Caco-2 (cell line): ENCODE measurements at regions of chr21 and their contacts with region 1.

Region 1: DNA sequence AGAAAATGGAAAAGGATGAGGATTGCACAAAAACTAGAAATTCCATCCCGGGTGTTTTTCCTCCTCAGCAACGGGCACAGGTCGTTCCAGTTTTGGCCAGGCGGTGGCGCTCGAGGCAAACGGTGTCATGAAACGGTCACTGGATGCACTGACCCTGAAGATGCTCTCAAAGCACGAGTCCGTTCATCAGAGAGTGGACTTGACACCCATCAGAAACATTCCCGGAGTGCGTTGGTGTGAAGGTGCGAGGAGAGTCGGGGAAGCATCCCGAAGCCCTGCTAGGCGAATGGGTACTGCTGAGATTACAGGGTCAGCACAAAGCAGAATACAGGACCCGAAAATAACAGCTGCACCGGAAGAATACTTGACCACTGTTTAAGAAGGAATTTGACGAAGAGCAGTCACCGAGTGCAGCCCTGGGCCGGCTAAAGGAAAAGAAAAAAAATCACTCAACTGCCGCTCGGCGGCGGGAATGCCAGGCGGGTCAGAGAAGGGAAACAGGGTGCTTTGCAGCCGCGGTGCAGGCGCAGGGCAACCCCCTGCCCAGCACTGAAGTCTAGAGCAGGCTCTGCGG is 71.7 kb upstream of the ETS2 start:
- DNase-seq: peak; percentile 81 to 90
- H3K4me3 ChIP-seq: no peak overlapping the region
- H3K4me3 Mint-ChIP-seq: peak overlapping the region; percentile 75
- H3K27ac Mint-ChIP-seq: peak overlapping the region; percentile 31
- H3K4me1 ChIP-seq: no peaks in the 10 kb centered on the region
- H3K4me1 Mint-ChIP-seq: peaks cover 7% of the 10 kb centered on the region
- H3K27me3 ChIP-seq: no peaks in the 10 kb centered on the region
- H3K27me3 Mint-ChIP-seq: no peaks in the 10 kb centered on the region
- CTCF ChIP-seq: peak; percentile 89

Region 2: GRCh38 chr21:38770660-38771059 is 36.6 kb after region 1 on chr21:
- CTCF ChIA-PET with region 1: no interaction called
- POLR2A ChIA-PET with region 1: no interaction called
- intact Hi-C with region 1: loop called (anchors 1 kb)
- DNase-seq: no peak
- H3K4me3 ChIP-seq: no peak overlapping the region
- H3K4me3 Mint-ChIP-seq: no peak overlapping the region
- H3K27ac Mint-ChIP-seq: peak overlapping the region; percentile 74
- H3K4me1 ChIP-seq: peaks cover 33% of the 10 kb centered on the region
- H3K4me1 Mint-ChIP-seq: peaks cover 26% of the 10 kb centered on the region
- H3K27me3 ChIP-seq: no peaks in the 10 kb centered on the region
- H3K27me3 Mint-ChIP-seq: no peaks in the 10 kb centered on the region
- CTCF ChIP-seq: no peak

Region 3: GRCh38 chr21:39125752-39126485 is 391.9 kb after region 1 on chr21:
- CTCF ChIA-PET with region 1: interaction called, 3 read pairs
- POLR2A ChIA-PET with region 1: no interaction called
- intact Hi-C with region 1: loop called (anchors 1 kb)
- DNase-seq: peak; percentile 57 to 66
- H3K4me3 ChIP-seq: no peak overlapping the region
- H3K4me3 Mint-ChIP-seq: no peak overlapping the region
- H3K27ac Mint-ChIP-seq: no peak overlapping the region
- H3K4me1 ChIP-seq: no peaks in the 10 kb centered on the region
- H3K4me1 Mint-ChIP-seq: peaks cover 7% of the 10 kb centered on the region
- H3K27me3 ChIP-seq: no peaks in the 10 kb centered on the region
- H3K27me3 Mint-ChIP-seq: no peaks in the 10 kb centered on the region
- CTCF ChIP-seq: peak; percentile 44 to 68

Region 4: DNA sequence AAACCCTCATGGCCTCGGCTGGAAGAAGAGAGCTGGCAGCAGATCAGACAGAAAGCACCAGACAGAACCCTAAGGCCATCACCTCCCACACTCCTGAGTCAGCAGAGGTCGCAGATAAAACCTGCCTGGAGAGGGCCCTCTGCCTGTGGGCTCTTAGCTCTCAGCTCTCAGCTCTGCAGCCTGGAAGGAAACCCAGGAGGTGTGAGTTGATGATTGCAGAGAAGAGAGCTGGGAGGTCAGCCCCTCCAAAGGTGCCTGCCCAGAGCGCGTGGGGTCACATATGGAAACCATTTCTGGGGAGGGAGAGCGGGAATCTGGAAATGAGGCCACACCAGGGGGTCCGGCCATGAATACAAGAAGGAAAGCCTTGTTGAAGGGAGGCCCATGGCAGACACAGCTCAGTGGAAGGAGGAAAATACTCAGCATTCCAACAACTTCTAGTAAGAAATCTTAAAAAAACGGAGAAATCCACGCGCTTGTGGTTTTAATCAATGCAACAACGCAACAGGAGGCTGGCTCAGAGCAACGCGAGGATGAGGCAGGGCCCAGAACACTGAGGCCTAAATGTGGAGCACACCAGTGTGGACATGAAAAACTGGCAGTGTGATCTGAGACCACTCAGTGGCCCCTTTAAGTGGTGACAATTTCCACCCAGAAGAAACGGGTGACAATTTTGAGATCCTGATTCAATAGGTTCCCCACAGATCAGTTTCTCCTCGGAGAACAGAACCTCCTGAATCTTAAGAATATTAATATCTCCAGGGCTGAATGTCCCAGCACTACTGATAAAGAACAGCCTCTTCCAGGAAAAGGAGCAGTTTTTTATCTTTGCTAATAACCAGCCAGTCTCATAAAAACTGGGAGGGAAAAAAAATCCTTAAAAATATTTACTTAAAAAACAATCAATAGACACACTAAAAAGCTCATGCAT is 403.5 kb after region 1 on chr21:
- CTCF ChIA-PET with region 1: interaction called, 3 read pairs
- POLR2A ChIA-PET with region 1: no interaction called
- intact Hi-C with region 1: loop called (anchors 1 kb)
- DNase-seq: no peak
- H3K4me3 ChIP-seq: no peak overlapping the region
- H3K4me3 Mint-ChIP-seq: no peak overlapping the region
- H3K27ac Mint-ChIP-seq: no peak overlapping the region
- H3K4me1 ChIP-seq: no peaks in the 10 kb centered on the region
- H3K4me1 Mint-ChIP-seq: no peaks in the 10 kb centered on the region
- H3K27me3 ChIP-seq: no peaks in the 10 kb centered on the region
- H3K27me3 Mint-ChIP-seq: no peaks in the 10 kb centered on the region
- CTCF ChIP-seq: no peak